ENCODE measurements at regions of chr16 and their contacts with region 1.

Region 1: DNA sequence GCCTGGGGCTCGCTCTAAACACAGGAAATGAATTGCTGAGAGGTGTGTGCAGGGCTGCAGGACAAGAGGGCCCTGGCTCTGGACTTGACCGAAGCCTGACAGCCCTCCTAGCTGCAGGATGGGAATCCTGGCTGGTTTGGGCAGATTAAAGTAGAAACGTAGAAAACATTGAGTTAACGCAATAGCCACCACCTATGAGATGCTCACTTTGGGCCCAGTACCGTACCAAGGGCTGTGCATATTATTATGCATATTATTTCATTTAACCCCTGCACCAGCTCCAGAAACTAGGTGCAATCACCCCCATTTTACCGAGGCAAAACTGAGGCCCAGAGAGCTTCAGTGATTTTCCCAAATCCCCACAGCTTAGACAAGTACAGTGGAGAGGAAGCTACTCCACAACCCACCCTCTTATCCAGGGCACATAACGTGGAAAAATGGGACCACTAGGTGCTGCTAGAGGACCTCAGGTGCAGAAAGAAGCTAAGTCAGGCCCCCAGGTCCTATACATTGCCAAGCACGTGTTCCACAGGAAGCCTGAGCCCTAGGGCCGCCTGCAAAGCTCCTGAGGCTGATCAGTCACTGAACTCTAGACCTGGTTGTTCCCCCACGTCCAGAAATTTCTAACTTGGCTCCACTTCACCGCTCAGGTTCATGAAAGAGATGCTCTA is 79.2 kb downstream of the MYH11 start:
- DNase-seq: peak; percentile 63 to 65
- H3K4me3 ChIP-seq: no peak overlapping the region
- H3K4me3 Mint-ChIP-seq: no peak overlapping the region
- H3K27ac Mint-ChIP-seq: no peak overlapping the region
- H3K4me1 ChIP-seq: no peaks in the 10 kb centered on the region
- H3K4me1 Mint-ChIP-seq: no peaks in the 10 kb centered on the region
- H3K27me3 ChIP-seq: no peaks in the 10 kb centered on the region
- H3K27me3 Mint-ChIP-seq: peaks cover 3% of the 10 kb centered on the region
- CTCF ChIP-seq: peak; percentile 59 to 76

Region 2: GRCh38 chr16:15790458-15790857 is 12.8 kb after region 1 on chr16:
- CTCF ChIA-PET with region 1: no interaction called
- POLR2A ChIA-PET with region 1: no interaction called
- intact Hi-C with region 1: no loop called
- DNase-seq: no peak
- H3K4me3 ChIP-seq: no peak overlapping the region
- H3K4me3 Mint-ChIP-seq: no peak overlapping the region
- H3K27ac Mint-ChIP-seq: no peak overlapping the region
- H3K4me1 ChIP-seq: no peaks in the 10 kb centered on the region
- H3K4me1 Mint-ChIP-seq: no peaks in the 10 kb centered on the region
- H3K27me3 ChIP-seq: no peaks in the 10 kb centered on the region
- H3K27me3 Mint-ChIP-seq: peaks cover 3% of the 10 kb centered on the region
- CTCF ChIP-seq: no peak

Region 3: DNA sequence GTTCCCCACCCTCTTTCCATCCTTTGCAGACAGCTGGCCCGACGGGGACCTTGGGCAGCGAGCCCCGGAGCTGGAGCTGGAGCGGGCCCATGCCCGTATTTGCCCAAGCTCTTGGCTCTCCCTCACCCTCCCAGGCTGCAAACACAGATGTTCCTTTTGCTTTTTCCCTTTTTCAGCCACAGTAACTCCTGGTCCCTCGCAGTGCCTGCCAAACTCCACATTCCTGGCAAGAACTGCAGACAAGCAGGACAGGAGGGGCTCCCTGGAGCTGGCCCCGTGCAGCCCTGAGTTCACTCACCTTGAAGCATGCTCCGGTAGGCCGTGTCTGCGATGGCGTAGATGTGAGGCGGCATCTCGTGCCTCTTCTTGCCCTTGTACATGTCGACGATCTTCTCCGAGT is 45.3 kb after region 1 on chr16:
- CTCF ChIA-PET with region 1: interaction called, 53 read pairs
- POLR2A ChIA-PET with region 1: no interaction called
- intact Hi-C with region 1: loop called (anchors 1 kb)
- DNase-seq: no peak
- H3K4me3 ChIP-seq: no peak overlapping the region
- H3K4me3 Mint-ChIP-seq: no peak overlapping the region
- H3K27ac Mint-ChIP-seq: no peak overlapping the region
- H3K4me1 ChIP-seq: no peaks in the 10 kb centered on the region
- H3K4me1 Mint-ChIP-seq: no peaks in the 10 kb centered on the region
- H3K27me3 ChIP-seq: no peaks in the 10 kb centered on the region
- H3K27me3 Mint-ChIP-seq: peaks cover 3% of the 10 kb centered on the region
- CTCF ChIP-seq: no peak